Calu3 (cell line): ENCODE measurements at regions of chr7 and their contacts with region 1.

Region 1: DNA sequence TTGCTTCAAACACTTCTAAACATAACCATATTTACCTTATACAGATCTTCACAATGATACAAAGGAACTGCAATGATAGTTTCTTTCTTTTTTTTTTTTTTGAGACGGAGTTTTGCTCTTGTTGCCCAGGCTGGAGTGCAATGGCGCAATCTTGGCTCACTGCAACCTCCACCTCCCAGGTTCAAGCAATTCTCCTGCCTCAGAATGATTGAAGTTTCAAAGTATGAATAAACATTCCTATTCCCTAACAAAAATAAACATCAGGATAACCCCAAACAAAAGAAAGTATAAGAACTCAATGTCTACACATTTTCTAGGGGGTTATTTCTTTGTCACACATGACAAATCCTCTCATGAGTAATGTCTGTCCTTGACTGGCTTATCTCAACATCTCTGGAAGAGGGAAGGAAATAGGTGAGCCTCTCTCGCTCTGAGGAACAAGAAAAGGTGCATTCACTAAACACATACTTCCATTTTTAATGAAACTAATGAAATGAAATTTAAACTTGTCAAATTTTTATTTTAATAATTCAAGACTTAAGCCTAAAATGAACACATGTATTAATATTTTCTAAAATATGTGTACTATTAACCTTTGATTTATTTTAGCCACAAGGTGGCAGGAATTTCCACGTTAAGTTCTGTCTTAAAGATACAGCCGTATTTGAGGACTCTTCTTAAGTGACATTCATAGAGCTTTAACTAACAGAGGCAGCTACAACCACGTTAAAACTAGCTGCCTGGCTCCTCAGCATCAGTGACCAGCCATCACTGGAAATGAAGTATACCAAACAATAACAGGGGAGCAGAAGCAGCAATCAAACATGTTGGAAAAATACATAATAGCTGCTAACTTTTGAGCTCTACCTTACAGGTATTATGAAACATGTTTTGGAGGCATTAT is 58.3 kb downstream of the MALSU1 start:
- DNase-seq: no peak
- H3K4me3 Mint-ChIP-seq: peak overlapping the region; percentile 30
- H3K27ac Mint-ChIP-seq: peak overlapping the region; percentile 47
- H3K4me1 Mint-ChIP-seq: peaks cover 39% of the 10 kb centered on the region
- H3K27me3 Mint-ChIP-seq: no peaks in the 10 kb centered on the region
- CTCF ChIP-seq: peak; percentile 50

Region 2: GRCh38 chr7:23418046-23418445 is 60.6 kb after region 1 on chr7:
- CTCF ChIA-PET with region 1: interaction called, 5 read pairs
- intact Hi-C with region 1: loop called (anchors 2 kb)
- DNase-seq: no peak
- H3K4me3 Mint-ChIP-seq: peak overlapping the region; percentile 1
- H3K27ac Mint-ChIP-seq: no peak overlapping the region
- H3K4me1 Mint-ChIP-seq: peaks cover 40% of the 10 kb centered on the region
- H3K27me3 Mint-ChIP-seq: no peaks in the 10 kb centered on the region
- CTCF ChIP-seq: no peak

Region 3: GRCh38 chr7:23431702-23432199 is 74.3 kb after region 1 on chr7:
- CTCF ChIA-PET with region 1: no interaction called
- intact Hi-C with region 1: loop called (anchors 1 kb)
- DNase-seq: peak; percentile 24
- H3K4me3 Mint-ChIP-seq: peak overlapping the region; percentile 5
- H3K27ac Mint-ChIP-seq: peak overlapping the region; percentile 88
- H3K4me1 Mint-ChIP-seq: peaks cover 59% of the 10 kb centered on the region
- H3K27me3 Mint-ChIP-seq: no peaks in the 10 kb centered on the region
- CTCF ChIP-seq: no peak

Region 4: DNA sequence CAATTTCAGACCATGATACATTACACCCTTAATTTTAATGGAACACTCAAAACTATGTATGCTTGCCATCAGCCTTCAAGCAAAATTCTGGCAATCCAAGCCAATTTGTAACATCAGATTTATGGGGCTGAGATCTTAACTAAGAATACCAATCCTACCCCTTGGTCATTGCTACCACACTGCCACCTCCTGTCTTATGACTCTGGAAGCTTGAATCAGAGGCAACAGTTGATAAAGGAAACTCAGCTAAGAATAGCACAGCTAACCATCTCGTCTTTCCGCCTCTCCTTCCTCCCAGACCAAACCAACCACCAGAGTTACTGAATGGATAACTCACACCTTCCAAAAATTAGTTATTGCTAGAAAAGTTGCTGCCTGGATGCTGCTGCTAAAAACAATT is 105.4 kb after region 1 on chr7:
- CTCF ChIA-PET with region 1: interaction called, 26 read pairs
- intact Hi-C with region 1: no loop called
- DNase-seq: peak; percentile 61
- H3K4me3 Mint-ChIP-seq: peak overlapping the region; percentile 69
- H3K27ac Mint-ChIP-seq: peak overlapping the region; percentile 55
- H3K4me1 Mint-ChIP-seq: peaks cover 70% of the 10 kb centered on the region
- H3K27me3 Mint-ChIP-seq: no peaks in the 10 kb centered on the region
- CTCF ChIP-seq: no peak

Region 5: GRCh38 chr7:23529262-23529859 is 171.9 kb after region 1 on chr7:
- CTCF ChIA-PET with region 1: interaction called, 3 read pairs
- intact Hi-C with region 1: loop called (anchors 5 kb)
- DNase-seq: no peak
- H3K4me3 Mint-ChIP-seq: peak overlapping the region; percentile 79
- H3K27ac Mint-ChIP-seq: peak overlapping the region; percentile 93
- H3K4me1 Mint-ChIP-seq: peaks cover 58% of the 10 kb centered on the region
- H3K27me3 Mint-ChIP-seq: no peaks in the 10 kb centered on the region
- CTCF ChIP-seq: no peak

Region 6: GRCh38 chr7:23546897-23547572 is 189.6 kb after region 1 on chr7:
- CTCF ChIA-PET with region 1: interaction called, 16 read pairs
- intact Hi-C with region 1: loop called (anchors 1 kb)
- DNase-seq: peak; percentile 87
- H3K4me3 Mint-ChIP-seq: no peak overlapping the region
- H3K27ac Mint-ChIP-seq: no peak overlapping the region
- H3K4me1 Mint-ChIP-seq: peaks cover 16% of the 10 kb centered on the region
- H3K27me3 Mint-ChIP-seq: no peaks in the 10 kb centered on the region
- CTCF ChIP-seq: peak; percentile 98